Right ventricle myocardium superior (tissue), 1 donor: ENCODE measurements at regions of chr2 and their contacts with region 1.

Region 1: DNA sequence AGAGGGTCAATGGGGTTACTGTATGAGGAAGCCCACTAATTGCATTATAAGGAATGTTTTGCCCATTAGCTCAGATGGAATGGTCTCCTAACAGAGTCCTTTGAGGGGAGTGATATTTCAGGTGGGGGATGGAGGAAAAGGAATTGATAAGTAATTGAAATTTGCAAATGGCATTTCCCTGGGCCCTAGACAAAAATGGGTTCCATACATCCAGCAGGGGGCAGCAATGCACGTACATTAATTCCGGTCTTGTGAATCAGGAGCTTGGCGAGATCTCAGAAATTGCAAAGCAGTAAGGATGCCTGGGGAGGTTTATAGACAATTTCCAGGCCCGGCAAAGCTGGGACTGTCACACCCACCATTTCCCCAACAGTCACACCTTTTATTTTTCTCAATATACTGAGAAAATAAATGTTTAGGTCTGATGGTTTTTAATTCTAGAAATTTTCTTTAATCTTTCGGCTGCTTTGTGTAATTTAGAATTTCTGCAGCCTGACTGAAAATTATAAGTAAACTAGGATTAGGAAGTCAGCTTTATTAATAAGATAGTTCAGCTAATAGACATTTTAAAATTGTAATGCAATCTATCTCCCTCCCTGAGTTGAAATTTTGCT is 122.8 kb downstream of the LYPD1 start:
- DNase-seq: peak; percentile 57
- ATAC-seq: peak; percentile 59

Region 2: DNA sequence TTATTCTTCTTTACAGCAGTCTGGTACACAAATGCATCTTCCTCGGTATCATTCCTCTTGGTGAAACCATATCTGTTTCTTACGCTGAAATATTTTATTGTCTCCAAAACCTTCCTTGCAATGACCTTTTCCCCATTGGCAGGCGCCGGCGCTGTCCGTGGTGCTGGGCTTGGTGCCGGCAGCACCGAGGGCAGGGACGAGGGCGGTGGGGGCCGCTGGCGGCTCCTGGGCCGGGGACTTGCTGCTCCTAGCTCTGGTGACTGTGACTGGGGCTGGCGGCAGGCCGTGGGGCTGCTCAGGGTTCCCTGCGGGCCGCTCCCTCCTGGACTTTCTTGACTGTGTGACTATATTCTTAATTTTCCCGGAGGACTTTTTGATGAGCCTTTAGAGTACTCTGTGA is 58.0 kb before region 1 on chr2:
- intact Hi-C with region 1: no loop called
- DNase-seq: peak; percentile 44
- ATAC-seq: no peak

Region 3: GRCh38 chr2:133166031-133166430 is 618.9 kb after region 1 on chr2:
- intact Hi-C with region 1: loop called (anchors 10 kb)
- DNase-seq: no peak
- ATAC-seq: no peak

Region 4: GRCh38 chr2:133844214-133844892 is 1297.2 kb after region 1 on chr2:
- intact Hi-C with region 1: loop called (anchors 5 kb)
- DNase-seq: peak; percentile 57
- ATAC-seq: peak; percentile 80